ENCODE measurements at regions of chr5 and their contacts with region 1.

Region 1: GRCh38 chr5:179836225-179837019 is 15.7 kb downstream of the SQSTM1 start:
- DNase-seq: no peak
- ATAC-seq: peak; percentile 8
- H3K4me3 ChIP-seq: no peak overlapping the region
- H3K27ac ChIP-seq: no peak overlapping the region
- H3K4me1 ChIP-seq: peaks cover 14% of the 10 kb centered on the region
- H3K27me3 ChIP-seq: no peaks in the 10 kb centered on the region
- CTCF ChIP-seq: peak; percentile 35; the same call in 1 of the 2 replicates
- EP300 ChIP-seq: no peak
- POLR2A ChIP-seq: no peak
- RAD21 ChIP-seq: no peak

Region 2: GRCh38 chr5:179294891-179295772 is 541.3 kb before region 1 on chr5:
- CTCF ChIA-PET with region 1: no interaction called
- POLR2A ChIA-PET with region 1: no interaction called
- in situ Hi-C with region 1: no loop called
- intact Hi-C with region 1: no loop called
- DNase-seq: no peak
- ATAC-seq: no peak; the same call in 2 of the 3 replicates
- H3K4me3 ChIP-seq: no peak overlapping the region
- H3K27ac ChIP-seq: no peak overlapping the region
- H3K4me1 ChIP-seq: no peaks in the 10 kb centered on the region
- H3K27me3 ChIP-seq: peaks cover 1 to 55% of the 10 kb centered on the region in 2 experiments; a peak in 4 of 5 replicates
- CTCF ChIP-seq: no peak
- EP300 ChIP-seq: no peak
- POLR2A ChIP-seq: no peak
- RAD21 ChIP-seq: no peak

Region 3: GRCh38 chr5:179697993-179698934 is 138.2 kb before region 1 on chr5:
- CTCF ChIA-PET with region 1: no interaction called
- POLR2A ChIA-PET with region 1: no interaction called
- in situ Hi-C with region 1: no loop called
- intact Hi-C with region 1: no loop called
- DNase-seq: peak; percentile 98
- ATAC-seq: peak; percentile 95
- H3K4me3 ChIP-seq: peak overlapping the region; percentile 74 to 91 (median 91)
- H3K27ac ChIP-seq: peak overlapping the region; percentile 96
- H3K4me1 ChIP-seq: peaks cover 53% of the 10 kb centered on the region
- H3K27me3 ChIP-seq: no peaks in the 10 kb centered on the region; a peak in 1 of 5 replicates
- CTCF ChIP-seq: 0 out of 2 replicates have a peak, but pooled peaks have one; percentile 11
- EP300 ChIP-seq: peak in 1 of 2 experiments; percentile 34; a peak in 2 of 4 replicates
- POLR2A ChIP-seq: peak; percentile 68 to 86
- RAD21 ChIP-seq: peak; percentile 65

Region 4: GRCh38 chr5:179821581-179822432 is 14.6 kb before region 1 on chr5:
- CTCF ChIA-PET with region 1: no interaction called
- POLR2A ChIA-PET with region 1: interaction called, 19 read pairs
- in situ Hi-C with region 1: no loop called
- intact Hi-C with region 1: no loop called
- DNase-seq: peak; percentile 80
- ATAC-seq: peak; percentile 48
- H3K4me3 ChIP-seq: peak overlapping the region; percentile 97 to 99 (median 99)
- H3K27ac ChIP-seq: peak overlapping the region; percentile 99
- H3K4me1 ChIP-seq: peaks cover 81% of the 10 kb centered on the region
- H3K27me3 ChIP-seq: no peaks in the 10 kb centered on the region
- CTCF ChIP-seq: peak; percentile 37
- EP300 ChIP-seq: no peak
- POLR2A ChIP-seq: peak in 1 of 2 experiments; percentile 89; a peak in 2 of 4 replicates
- RAD21 ChIP-seq: no peak

Region 5: DNA sequence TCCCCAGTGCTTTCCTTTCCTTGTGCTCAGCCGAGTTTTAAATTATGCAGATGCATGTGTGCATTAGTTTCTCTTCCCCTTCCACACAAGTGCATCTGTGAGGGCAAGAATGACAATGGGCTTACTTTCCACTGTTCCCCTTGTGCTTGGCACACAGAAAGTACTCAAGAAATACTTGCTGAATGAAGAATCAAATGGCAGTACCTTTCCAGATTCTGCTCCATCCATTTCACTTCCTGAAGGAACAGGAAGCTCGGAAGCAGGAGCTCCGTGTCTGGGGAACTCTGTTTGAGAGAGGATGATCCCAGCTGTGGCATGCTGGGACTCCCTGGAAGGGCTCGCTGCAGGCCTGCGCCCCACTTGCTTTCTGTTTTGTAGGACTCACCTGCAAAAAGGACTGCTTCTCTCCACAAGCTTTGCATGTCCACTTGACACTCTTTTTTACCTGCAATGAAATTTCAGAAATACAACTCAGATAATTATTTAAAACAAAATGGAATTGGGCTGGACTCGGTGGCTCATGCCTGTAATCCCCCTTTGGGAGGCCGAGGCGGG is 16.6 kb after region 1 on chr5:
- CTCF ChIA-PET with region 1: no interaction called
- POLR2A ChIA-PET with region 1: interaction called, 16 read pairs
- in situ Hi-C with region 1: no loop called
- intact Hi-C with region 1: no loop called
- DNase-seq: no peak
- ATAC-seq: peak; percentile 9; the same call in 2 of the 3 replicates
- H3K4me3 ChIP-seq: peak overlapping the region in 1 of 3 experiments; percentile 29; a peak in 2 of 6 replicates
- H3K27ac ChIP-seq: peak overlapping the region; percentile 51
- H3K4me1 ChIP-seq: peaks cover 33% of the 10 kb centered on the region
- H3K27me3 ChIP-seq: no peaks in the 10 kb centered on the region
- CTCF ChIP-seq: no peak
- EP300 ChIP-seq: no peak
- POLR2A ChIP-seq: no peak
- RAD21 ChIP-seq: no peak

Measured in HepG2 (cell line).